ENCODE measurements at regions of chr14 and their contacts with region 1.

Region 1: GRCh38 chr14:64012003-64012402 is 159.2 kb downstream of the SYNE2 start:
- DNase-seq: no peak
- H3K4me3 Mint-ChIP-seq: no peak overlapping the region
- H3K27ac Mint-ChIP-seq: peak overlapping the region; percentile 24
- H3K4me1 Mint-ChIP-seq: no peaks in the 10 kb centered on the region
- H3K27me3 Mint-ChIP-seq: no peaks in the 10 kb centered on the region
- CTCF ChIP-seq: no peak

Region 2: DNA sequence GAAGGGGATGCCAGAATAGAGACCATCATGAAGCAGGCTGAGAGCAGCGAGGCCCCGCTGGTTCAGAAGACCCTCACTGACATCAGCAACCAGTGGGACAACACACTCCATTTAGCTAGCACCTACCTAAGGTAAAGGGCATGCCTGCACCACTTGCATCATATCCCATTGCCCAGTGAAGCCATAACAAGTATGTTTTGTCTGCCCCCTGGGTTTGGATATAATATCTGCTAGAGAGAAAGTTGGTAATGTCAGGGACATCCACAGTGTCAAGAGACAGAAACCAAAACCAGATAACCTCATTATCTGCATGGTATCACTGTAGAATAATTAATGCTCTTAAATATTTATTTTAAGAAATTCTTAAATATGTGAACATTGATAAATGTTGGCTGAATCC is 14.6 kb after region 1 on chr14:
- CTCF ChIA-PET with region 1: interaction called, 12 read pairs
- POLR2A ChIA-PET with region 1: no interaction called
- intact Hi-C with region 1: no loop called
- DNase-seq: peak; percentile 10
- H3K4me3 Mint-ChIP-seq: no peak overlapping the region
- H3K27ac Mint-ChIP-seq: no peak overlapping the region
- H3K4me1 Mint-ChIP-seq: no peaks in the 10 kb centered on the region
- H3K27me3 Mint-ChIP-seq: no peaks in the 10 kb centered on the region
- CTCF ChIP-seq: no peak

Measured in MCF 10A (cell line).